Ovary (tissue), 10 donors: ENCODE measurements at regions of chr16 and their contacts with region 1.

Region 1: GRCh38 chr16:10971560-10971961 is 27.2 kb downstream of the CLEC16A start:
- DNase-seq: peak in 4 of 5 donors; percentile 50 to 70 (median 56)
- H3K4me3 ChIP-seq: no peak overlapping the region
- H3K27ac ChIP-seq: no peak overlapping the region
- H3K4me1 ChIP-seq: peaks cover 7% of the 10 kb centered on the region
- H3K27me3 ChIP-seq: no peaks in the 10 kb centered on the region
- CTCF ChIP-seq: peak; percentile 74 to 93 (median 82)
- EP300 ChIP-seq: no peak
- POLR2A ChIP-seq: no peak

Region 2: DNA sequence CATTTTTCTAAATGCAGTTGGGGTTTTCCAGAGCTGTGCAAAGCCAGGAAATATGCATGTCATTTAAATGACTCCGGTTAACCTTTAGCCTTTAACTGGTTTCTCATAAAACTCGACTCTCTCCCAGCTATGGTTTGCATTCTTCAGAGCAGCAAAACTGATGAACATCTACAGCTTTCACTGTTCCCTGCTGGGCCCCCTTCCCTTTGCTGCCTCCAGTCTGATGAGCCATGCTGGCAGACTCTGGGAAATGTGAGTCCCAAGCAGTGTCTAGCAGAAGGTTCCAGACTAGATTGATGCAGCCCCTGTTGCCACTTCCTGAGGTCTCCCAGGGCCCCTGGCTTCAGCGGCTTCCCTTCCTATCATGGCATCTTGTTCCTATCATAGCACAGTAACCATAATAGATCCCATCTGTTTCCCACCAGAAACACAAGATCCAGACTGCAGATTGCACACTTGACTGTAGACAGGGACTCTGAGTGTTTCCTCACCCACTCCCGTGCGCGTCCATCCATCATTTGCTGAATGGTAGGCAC is 108.2 kb after region 1 on chr16:
- intact Hi-C with region 1: loop called in 1 of 4 experiments (anchors 10 kb)
- DNase-seq: peak in 1 of 5 donors; percentile 20
- H3K4me3 ChIP-seq: no peak overlapping the region
- H3K27ac ChIP-seq: no peak overlapping the region
- H3K4me1 ChIP-seq: peaks cover 23% of the 10 kb centered on the region
- H3K27me3 ChIP-seq: no peaks in the 10 kb centered on the region
- CTCF ChIP-seq: no peak
- EP300 ChIP-seq: no peak
- POLR2A ChIP-seq: no peak

Region 3: GRCh38 chr16:11094857-11095565 is 123.5 kb after region 1 on chr16:
- intact Hi-C with region 1: no loop called
- DNase-seq: peak in 1 of 5 donors; percentile 26
- H3K4me3 ChIP-seq: no peak overlapping the region
- H3K27ac ChIP-seq: peak overlapping the region in 1 of 2 donors; percentile 53
- H3K4me1 ChIP-seq: peaks cover 17% of the 10 kb centered on the region
- H3K27me3 ChIP-seq: no peaks in the 10 kb centered on the region
- CTCF ChIP-seq: no peak
- EP300 ChIP-seq: no peak
- POLR2A ChIP-seq: no peak

Region 4: GRCh38 chr16:11240636-11241473 is 269.3 kb after region 1 on chr16:
- intact Hi-C with region 1: no loop called
- DNase-seq: no peak
- H3K4me3 ChIP-seq: no peak overlapping the region
- H3K27ac ChIP-seq: no peak overlapping the region
- H3K4me1 ChIP-seq: no peaks in the 10 kb centered on the region
- H3K27me3 ChIP-seq: no peaks in the 10 kb centered on the region
- CTCF ChIP-seq: no peak
- EP300 ChIP-seq: no peak
- POLR2A ChIP-seq: no peak

Region 5: GRCh38 chr16:11255737-11256660 is 284.4 kb after region 1 on chr16 and contains the start of gene SOCS1:
- intact Hi-C with region 1: loop called (anchors 2 kb)
- DNase-seq: peak; percentile 85 to 93 (median 89)
- H3K4me3 ChIP-seq: peak within 1 kb of the TSS; percentile 87
- H3K27ac ChIP-seq: peak within 1 kb of the TSS; percentile 82 to 99
- H3K4me1 ChIP-seq: peaks cover 6% of the 10 kb centered on the region
- H3K27me3 ChIP-seq: no peaks in the 10 kb centered on the region
- CTCF ChIP-seq: peak; percentile 85 to 98 (median 98)
- EP300 ChIP-seq: no peak
- POLR2A ChIP-seq: peak; percentile 94
- total RNA-seq, gene SOCS1: 6.3 to 42.7 (median 9.4) TPM

Region 6: GRCh38 chr16:11361701-11362451 is 390.3 kb after region 1 on chr16:
- intact Hi-C with region 1: loop called (anchors 5 to 10 kb)
- DNase-seq: no peak
- H3K4me3 ChIP-seq: no peak overlapping the region
- H3K27ac ChIP-seq: peak overlapping the region in 1 of 2 donors; percentile 28
- H3K4me1 ChIP-seq: peaks cover 11% of the 10 kb centered on the region
- H3K27me3 ChIP-seq: no peaks in the 10 kb centered on the region
- CTCF ChIP-seq: no peak
- EP300 ChIP-seq: no peak
- POLR2A ChIP-seq: no peak